ENCODE measurements at regions of chr3 and their contacts with region 1.

Region 1: DNA sequence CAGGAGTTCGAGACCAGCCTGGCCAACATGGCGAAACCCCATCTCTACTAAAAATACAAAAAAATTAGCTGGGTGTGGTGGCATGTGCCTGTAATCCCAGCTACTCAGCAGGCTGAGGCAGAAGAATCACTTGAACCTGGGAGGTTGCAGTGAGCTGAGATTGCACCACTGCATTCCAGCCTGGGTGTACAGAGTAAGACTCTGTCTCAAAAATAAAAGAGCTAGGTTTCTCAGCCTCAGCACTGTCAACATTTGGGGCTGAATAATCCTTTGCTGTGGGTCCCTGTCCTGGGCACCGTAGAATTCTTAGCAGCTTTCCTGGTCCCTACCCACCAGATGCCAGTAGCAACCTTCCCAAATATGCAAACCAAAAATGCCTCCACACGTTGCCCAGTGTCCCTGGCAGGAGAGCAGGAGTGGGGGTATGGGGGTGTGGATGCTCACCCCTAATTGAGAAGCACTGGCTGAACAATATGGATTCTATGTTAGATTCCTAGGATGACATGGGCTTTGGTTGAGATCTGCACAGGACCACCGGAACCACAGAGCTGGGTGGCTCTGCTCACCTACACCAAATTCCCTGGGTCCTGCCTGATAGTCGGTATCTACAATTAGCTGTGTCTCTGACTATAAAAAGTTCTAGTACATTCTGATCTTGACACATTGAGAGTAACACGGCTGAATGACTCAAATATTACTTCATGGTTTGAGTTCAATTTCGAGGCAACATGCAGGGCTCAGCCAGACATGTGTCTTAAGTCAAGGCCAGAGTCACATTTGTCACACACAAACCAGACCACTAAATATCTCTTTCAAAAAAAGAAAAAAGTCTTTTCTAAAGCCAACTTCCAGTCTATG is 577.0 kb upstream of the MDFIC2 start:
- DNase-seq: no peak

Region 2: DNA sequence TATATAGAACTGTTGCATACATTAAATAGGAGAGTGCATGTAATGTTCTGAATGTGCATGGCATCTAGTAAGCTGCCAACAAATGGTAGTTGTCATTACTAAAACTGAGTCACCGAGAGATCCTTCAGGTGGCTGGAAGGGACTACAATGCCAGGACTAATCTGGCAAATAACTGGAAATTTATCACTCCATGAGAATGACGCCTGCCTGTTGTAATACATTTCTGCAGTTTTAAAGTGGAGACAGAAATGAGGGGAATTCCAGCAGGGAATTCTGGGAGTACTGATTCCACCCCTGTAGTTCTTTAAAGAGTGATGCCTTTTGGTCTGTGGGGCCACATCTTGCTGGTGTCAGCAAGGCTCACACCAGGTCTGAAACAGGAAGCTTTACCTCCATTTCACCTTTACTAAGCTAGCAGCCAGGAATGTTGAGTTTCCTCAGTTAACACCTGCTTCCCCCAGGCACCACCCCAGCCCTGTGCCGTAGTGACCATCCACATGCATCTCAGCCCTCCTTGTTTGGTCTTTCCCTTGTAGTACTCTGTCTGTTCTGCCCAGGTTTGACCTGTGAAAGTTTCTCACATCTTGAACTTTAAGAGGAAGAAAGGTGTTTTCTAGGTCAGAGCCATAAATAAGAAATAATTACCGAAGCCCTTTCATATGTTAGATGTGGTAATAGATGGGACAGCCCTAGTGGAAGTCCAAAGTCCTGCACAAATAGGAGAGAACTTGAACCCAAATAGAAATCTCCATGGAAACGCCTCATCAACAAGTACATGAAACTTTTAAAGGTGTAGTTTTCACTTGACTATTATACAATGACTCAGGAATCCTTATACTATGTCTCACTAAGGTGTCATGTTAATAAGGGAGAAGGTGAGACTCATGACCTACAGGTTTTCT is 1710.3 kb before region 1 on chr3:
- intact Hi-C with region 1: loop called in 1 of 2 experiments (anchors 10 kb)
- DNase-seq: no peak

Region 3: GRCh38 chr3:70840106-70840875 is 49.1 kb before region 1 on chr3:
- intact Hi-C with region 1: no loop called
- DNase-seq: no peak

Region 4: DNA sequence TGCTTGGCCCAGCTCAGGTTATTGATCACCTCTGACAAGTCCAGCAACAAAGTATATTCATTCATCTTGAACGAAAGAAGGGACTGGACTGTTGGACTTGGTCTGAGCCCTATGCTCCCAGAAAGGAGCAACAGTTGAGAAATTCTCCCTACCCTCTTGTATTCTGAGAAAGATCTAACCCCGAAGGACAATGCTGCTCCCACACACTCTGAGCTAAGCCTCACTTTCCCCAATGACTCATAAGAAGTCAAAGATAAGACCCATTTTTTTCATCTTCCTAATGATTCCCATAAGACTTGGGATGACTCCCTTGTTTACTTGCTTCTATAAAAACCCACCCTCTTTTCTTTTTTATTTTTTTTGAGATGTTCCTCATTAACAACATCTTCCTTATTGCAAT is 27.5 kb before region 1 on chr3:
- intact Hi-C with region 1: no loop called
- DNase-seq: no peak

Measured in posterior vena cava (tissue), 2 donors.